Mammary epithelial cell (primary cell): ENCODE measurements at regions of chr6 and their contacts with region 1.

Region 1: GRCh38 chr6:152338335-152339125 is 298.6 kb downstream of the SYNE1 start:
- DNase-seq: peak; percentile 8
- H3K4me3 ChIP-seq: no peak overlapping the region
- H3K27ac ChIP-seq: no peak overlapping the region
- H3K4me1 ChIP-seq: no peaks in the 10 kb centered on the region
- H3K27me3 ChIP-seq: no peaks in the 10 kb centered on the region
- CTCF ChIP-seq: peak; percentile 94 to 97

Region 2: DNA sequence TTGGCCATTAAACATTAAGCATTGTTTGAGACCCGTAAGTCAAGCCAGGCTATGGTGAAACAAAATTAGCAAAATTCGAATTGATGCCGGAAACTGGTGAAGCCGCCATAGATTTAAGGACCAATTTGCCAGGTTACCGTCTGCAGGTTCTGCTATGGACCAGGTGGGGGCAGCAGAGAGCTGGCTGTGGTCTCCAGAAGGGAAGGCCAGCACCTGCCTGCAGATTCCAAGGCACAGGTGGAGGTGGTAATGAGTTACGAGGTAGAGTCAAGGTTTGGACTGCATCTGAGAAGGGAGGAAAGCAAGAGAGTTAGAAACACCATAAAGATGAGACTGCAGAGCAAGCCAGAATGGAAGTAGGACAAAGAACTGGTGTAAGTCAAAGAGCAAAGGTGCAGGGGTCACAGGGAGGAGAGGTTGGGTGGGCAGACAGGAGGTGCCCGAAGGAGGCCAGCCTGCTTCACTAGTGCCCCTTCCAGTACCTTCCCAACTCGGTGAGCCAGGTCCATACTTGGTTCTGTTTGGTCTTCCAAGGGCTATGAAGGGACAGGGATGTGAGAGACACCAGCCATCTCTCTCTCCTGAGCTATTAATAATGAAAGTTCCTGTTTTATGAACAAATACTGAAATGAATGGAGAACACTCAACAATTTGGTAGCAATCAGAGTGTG is 662.6 kb before region 1 on chr6:
- CTCF ChIA-PET with region 1: no interaction called
- dilution Hi-C with region 1: no loop called
- in situ Hi-C with region 1: no loop called
- intact Hi-C with region 1: loop called (anchors 5 kb)
- DNase-seq: peak; percentile 38
- H3K4me3 ChIP-seq: no peak overlapping the region
- H3K27ac ChIP-seq: no peak overlapping the region
- H3K4me1 ChIP-seq: no peaks in the 10 kb centered on the region
- H3K27me3 ChIP-seq: no peaks in the 10 kb centered on the region
- CTCF ChIP-seq: peak; percentile 95 to 98

Region 3: DNA sequence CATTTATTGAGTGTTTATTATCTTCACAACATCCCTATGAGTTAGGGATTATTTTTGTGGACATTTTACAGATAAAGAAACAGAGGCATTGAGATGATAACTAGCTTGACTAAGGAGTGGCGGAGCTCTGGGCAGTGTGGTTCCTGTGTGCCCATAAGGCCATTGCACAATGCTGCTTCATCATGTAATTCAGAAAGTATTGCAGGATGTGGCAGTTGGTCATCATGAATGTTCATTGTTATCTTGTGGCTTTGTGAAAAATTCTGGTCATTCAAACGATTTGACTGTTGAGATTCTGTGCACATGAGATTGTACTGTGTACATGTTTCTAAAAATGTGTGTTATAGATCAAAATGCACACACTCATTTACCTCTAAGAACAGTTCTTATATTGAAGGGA is 380.2 kb before region 1 on chr6:
- CTCF ChIA-PET with region 1: no interaction called
- dilution Hi-C with region 1: no loop called
- in situ Hi-C with region 1: no loop called
- intact Hi-C with region 1: loop called (anchors 1 kb)
- DNase-seq: peak; percentile 80
- H3K4me3 ChIP-seq: no peak overlapping the region
- H3K27ac ChIP-seq: peak overlapping the region; percentile 28
- H3K4me1 ChIP-seq: peaks cover 26% of the 10 kb centered on the region
- H3K27me3 ChIP-seq: no peaks in the 10 kb centered on the region
- CTCF ChIP-seq: no peak

Region 4: GRCh38 chr6:152301764-152302568 is 36.6 kb before region 1 on chr6:
- CTCF ChIA-PET with region 1: no interaction called
- dilution Hi-C with region 1: no loop called
- in situ Hi-C with region 1: no loop called
- intact Hi-C with region 1: loop called (anchors 2 kb)
- DNase-seq: peak; percentile 86
- H3K4me3 ChIP-seq: peak overlapping the region; percentile 63 to 92 (median 83)
- H3K27ac ChIP-seq: peak overlapping the region; percentile 9
- H3K4me1 ChIP-seq: peaks cover 5% of the 10 kb centered on the region
- H3K27me3 ChIP-seq: no peaks in the 10 kb centered on the region
- CTCF ChIP-seq: peak; percentile 38 to 70